Right cardiac atrium (tissue), 5 donors: ENCODE measurements at regions of chr16 and their contacts with region 1.

Region 1: GRCh38 chr16:89507834-89508590 is at the start of gene SPG7:
- DNase-seq: peak; percentile 86 to 95 (median 94)
- ATAC-seq: peak; percentile 92 to 94
- H3K4me3 ChIP-seq: peak within 1 kb of the TSS; percentile 91
- H3K27ac ChIP-seq: peak within 1 kb of the TSS; percentile 87
- H3K4me1 ChIP-seq: peaks cover 15% of the 10 kb centered on the region
- H3K27me3 ChIP-seq: no peaks in the 10 kb centered on the region
- total RNA-seq, gene SPG7: 81.9 to 101 (median 88.6) TPM

Region 2: GRCh38 chr16:89330177-89330856 is 177.7 kb before region 1 on chr16:
- intact Hi-C with region 1: loop called in 1 of 4 experiments (anchors 5 kb)
- DNase-seq: peak in 2 of 3 donors; percentile 67 to 72
- ATAC-seq: peak in 1 of 2 donors; percentile 8
- H3K4me3 ChIP-seq: no peak overlapping the region
- H3K27ac ChIP-seq: peak overlapping the region; percentile 28
- H3K4me1 ChIP-seq: peaks cover 28% of the 10 kb centered on the region
- H3K27me3 ChIP-seq: no peaks in the 10 kb centered on the region